ENCODE measurements at regions of chr2 and their contacts with region 1.

Region 1: DNA sequence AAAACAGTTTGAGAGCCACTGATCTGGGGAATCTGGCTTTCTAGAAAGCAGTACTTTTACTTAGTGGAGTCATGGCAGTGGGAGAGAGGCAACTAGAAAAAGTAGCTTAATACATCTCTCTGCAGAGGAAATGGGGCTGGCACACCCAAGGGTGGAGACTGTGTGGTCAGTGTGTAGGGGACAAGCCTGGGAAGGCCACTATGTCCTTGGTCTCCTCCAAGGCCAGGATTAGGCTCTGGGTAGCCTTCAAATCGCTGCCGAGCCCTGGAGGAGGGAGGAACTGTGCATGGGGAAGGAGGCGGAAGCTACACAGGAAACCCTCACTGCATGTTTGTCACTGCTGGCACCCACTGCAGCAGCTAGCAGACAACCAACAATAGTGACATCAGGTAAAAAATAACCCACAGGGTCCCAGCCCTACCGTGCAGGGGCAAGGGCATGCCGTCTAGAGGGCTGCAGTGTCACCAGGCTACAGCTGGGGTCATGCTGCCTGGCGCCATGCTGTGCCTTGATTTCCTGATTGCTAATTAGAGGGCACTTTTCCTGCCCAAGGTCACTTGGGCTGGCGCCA is 34.8 kb downstream of the LBH start:
- DNase-seq: peak; percentile 74
- H3K4me3 Mint-ChIP-seq: peak overlapping the region; percentile 75
- H3K27ac Mint-ChIP-seq: peak overlapping the region; percentile 92
- H3K4me1 Mint-ChIP-seq: peaks cover 64% of the 10 kb centered on the region
- H3K27me3 Mint-ChIP-seq: no peaks in the 10 kb centered on the region

Region 2: DNA sequence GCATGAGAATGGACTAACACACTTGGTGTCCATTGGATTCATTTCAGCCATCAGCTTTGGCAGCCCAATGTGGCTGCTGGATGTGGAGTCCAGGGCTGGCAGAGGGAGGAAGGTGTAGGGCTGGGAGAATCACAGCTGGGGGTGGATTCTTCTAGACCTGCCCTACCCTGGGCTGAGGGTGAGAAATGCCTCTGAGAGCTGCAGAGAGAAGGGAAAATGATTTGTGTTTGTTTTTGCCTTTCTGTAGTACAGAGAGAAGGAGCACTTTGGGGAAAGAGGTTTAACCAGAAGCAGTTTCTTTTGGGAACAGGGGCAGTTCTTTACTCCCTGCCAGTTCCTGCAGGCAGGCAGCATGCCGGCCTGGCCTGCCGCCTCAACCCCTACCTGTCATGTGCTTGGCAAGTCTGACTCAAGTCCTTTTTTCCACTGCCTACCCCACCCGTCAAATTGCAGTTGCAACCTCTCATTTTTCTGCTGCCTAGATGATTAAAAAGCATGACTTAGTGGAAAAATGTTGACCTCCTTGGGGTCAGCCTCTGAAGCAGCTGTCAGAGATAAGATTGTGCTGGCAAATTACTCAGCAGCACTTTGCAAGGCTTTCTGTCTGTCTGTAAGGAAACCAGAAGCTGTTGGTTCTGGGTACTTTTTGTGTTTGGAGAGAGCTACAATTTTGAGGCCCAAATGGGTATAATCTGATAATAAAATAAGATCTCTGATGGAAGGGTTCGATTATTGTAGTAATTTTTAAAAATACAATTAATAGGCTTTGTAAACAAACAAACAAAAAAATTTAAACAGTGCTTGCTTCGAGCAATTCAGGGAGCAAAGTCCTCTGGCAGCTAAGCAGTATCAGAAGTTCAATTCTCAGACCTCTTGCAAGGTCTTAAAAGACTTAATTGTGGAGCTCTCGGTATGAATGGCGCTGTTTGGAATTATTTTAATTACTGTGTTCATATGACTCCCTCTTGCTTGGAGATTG is 13.1 kb before region 1 on chr2:
- CTCF ChIA-PET with region 1: interaction called, 5 read pairs
- POLR2A ChIA-PET with region 1: interaction called, 13 read pairs
- DNase-seq: peak; percentile 65
- H3K4me3 Mint-ChIP-seq: peak overlapping the region; percentile 4
- H3K27ac Mint-ChIP-seq: peak overlapping the region; percentile 69
- H3K4me1 Mint-ChIP-seq: peaks cover 72% of the 10 kb centered on the region
- H3K27me3 Mint-ChIP-seq: no peaks in the 10 kb centered on the region

Region 3: DNA sequence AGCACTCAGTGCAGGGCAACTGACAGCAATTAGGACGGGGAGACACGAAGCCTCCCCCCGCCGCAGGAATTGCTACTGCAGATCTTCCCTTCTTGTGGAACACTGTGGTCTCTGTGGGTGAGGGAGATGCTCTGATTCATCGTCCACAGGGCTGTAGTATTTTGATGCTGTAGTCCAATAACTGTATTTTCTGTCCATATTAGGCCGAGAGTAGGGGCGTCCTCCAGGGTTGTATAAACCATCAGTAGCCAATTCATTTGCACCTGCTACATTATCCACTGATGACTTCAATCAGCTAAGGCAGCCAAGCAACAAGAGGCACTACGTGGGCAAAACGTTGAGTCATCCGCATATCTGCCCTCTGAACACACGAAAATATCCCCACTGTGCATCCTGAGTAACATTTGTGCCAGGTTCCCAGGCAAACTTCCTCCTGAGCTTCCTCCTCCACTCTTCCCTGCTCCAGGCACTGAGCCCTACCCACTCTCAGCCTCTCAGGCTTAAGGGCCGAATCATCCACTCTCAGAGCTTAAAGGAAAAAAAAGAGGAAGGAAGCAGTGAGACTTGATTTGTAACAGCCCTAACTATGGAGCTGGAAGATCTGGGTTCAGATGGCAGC is 27.3 kb after region 1 on chr2:
- CTCF ChIA-PET with region 1: no interaction called
- POLR2A ChIA-PET with region 1: no interaction called
- DNase-seq: no peak
- H3K4me3 Mint-ChIP-seq: no peak overlapping the region
- H3K27ac Mint-ChIP-seq: no peak overlapping the region
- H3K4me1 Mint-ChIP-seq: peaks cover 3% of the 10 kb centered on the region
- H3K27me3 Mint-ChIP-seq: no peaks in the 10 kb centered on the region

Region 4: GRCh38 chr2:30310955-30311354 is 44.8 kb after region 1 on chr2:
- CTCF ChIA-PET with region 1: no interaction called
- POLR2A ChIA-PET with region 1: no interaction called
- DNase-seq: no peak
- H3K4me3 Mint-ChIP-seq: no peak overlapping the region
- H3K27ac Mint-ChIP-seq: no peak overlapping the region
- H3K4me1 Mint-ChIP-seq: peaks cover 17% of the 10 kb centered on the region
- H3K27me3 Mint-ChIP-seq: no peaks in the 10 kb centered on the region

Region 5: DNA sequence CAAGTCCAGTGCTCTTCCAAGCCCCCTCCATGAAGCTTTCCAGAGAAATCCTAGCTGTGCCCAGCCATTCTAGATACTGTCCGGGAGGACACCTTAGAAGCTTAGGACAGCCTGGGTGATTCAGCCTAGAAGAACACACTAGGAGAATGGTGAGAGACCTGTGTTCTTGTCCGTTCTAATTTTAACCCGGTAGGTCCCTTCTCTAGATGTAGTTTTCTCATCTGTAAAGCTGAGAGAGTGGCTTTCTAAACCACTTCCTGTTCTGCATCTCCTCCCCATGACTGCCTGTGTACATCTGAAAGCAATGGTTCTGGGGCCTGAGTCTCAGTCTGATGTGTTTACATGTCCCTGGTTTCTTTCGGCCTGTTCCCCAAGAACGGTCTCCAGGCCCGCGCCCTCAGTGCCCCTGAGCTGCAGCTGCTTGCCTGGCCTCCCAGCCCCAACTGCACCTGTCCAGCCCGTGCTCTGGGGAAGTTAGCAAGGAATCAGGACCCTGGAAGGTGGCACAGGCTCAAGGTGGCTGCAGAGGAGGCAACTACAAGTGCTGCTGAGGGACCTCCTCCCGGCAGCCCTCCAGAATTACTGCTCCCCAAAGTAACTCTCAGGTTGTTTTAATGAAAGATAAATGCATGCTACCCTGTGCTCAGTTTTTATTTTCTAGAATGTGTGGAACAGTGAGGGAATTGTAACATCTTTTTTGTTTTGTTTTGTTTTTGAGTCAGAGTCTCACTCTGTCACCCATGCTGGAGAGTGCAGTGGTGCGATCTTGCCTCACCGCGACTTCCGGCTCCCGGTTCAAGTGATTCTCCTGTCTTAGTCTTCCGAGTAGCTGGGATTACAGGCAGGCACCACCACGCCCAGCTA is 71.1 kb after region 1 on chr2:
- CTCF ChIA-PET with region 1: interaction called, 3 read pairs
- POLR2A ChIA-PET with region 1: interaction called, 18 read pairs
- DNase-seq: peak; percentile 75
- H3K4me3 Mint-ChIP-seq: peak overlapping the region; percentile 72
- H3K27ac Mint-ChIP-seq: peak overlapping the region; percentile 98
- H3K4me1 Mint-ChIP-seq: peaks cover 65% of the 10 kb centered on the region
- H3K27me3 Mint-ChIP-seq: no peaks in the 10 kb centered on the region

Measured in activated CD4-positive, alpha-beta memory T cell treated with anti-CD3 and anti-CD28 coated beads, Interleukin-2, amount 10 ng/mL, durations not matched to agents 7 days and 5 days (primary cell).